CD4-positive, alpha-beta memory T cell (primary cell): ENCODE measurements at regions of chr6 and their contacts with region 1.

Region 1: DNA sequence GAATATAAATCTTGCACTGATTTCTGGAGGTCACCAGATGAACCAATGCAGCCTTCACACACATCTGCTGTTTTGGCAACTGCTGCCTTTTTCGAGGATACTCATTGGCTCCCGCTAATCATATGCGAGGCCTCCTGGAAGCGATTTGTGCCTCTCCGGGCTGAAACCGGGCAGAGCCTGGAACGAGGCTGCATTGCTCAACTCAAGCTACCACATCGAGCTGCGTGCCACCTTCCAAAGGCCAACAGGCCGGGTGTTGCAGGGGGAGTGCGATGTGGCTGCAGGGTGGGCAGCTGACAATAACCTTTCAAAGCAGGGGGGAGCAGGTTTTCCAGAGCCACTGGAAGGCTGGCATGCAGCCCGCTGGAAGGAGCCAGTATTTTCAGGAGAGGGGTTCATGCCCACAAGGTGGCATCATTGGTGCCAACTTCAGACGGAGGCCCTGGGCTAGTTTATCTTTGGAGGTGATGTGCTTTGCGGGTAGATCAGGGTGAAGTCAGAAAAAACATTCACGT is 122.6 kb upstream of the IFNGR1 start:
- DNase-seq: peak; percentile 56 to 67 (median 62)
- H3K4me3 ChIP-seq: no peak overlapping the region
- H3K4me3 Mint-ChIP-seq: peak overlapping the region; percentile 4 to 92 (median 76)
- H3K27ac ChIP-seq: no peak overlapping the region
- H3K27ac Mint-ChIP-seq: peak overlapping the region in 1 of 7 donors; percentile 15
- H3K4me1 ChIP-seq: peaks cover 18% of the 10 kb centered on the region
- H3K4me1 Mint-ChIP-seq: peaks cover 15 to 32% (median 20%) of the 10 kb centered on the region in 4 donors
- H3K27me3 ChIP-seq: no peaks in the 10 kb centered on the region
- H3K27me3 Mint-ChIP-seq: no peaks in the 10 kb centered on the region

Region 2: GRCh38 chr6:137351890-137352289 is 10.2 kb after region 1 on chr6:
- CTCF ChIA-PET with region 1: interaction called, 26 read pairs
- POLR2A ChIA-PET with region 1: interaction called, 15 read pairs
- intact Hi-C with region 1: no loop called
- DNase-seq: no peak
- H3K4me3 ChIP-seq: no peak overlapping the region
- H3K4me3 Mint-ChIP-seq: no peak overlapping the region
- H3K27ac ChIP-seq: no peak overlapping the region
- H3K27ac Mint-ChIP-seq: peak overlapping the region in 4 of 7 donors; percentile 25 to 81 (median 29)
- H3K4me1 ChIP-seq: peaks cover 15% of the 10 kb centered on the region
- H3K4me1 Mint-ChIP-seq: peaks cover 12 to 22% (median 21%) of the 10 kb centered on the region in 4 donors
- H3K27me3 ChIP-seq: no peaks in the 10 kb centered on the region
- H3K27me3 Mint-ChIP-seq: no peaks in the 10 kb centered on the region

Region 3: DNA sequence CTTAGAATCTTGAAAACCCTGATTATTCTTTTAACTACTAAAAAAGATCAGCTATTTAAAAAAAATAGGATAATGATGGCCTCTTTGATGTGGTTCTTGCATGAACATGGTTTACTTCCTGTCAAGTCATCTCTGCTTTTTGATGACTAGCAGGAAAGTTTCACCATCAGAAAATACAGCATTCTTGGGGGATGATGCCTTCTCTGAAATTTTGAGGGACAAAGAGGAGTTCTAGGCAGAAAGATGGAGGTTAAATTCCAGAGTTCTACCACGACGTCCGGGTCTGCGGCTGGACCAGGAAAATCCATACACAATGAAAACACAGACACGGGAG is 22.0 kb after region 1 on chr6:
- CTCF ChIA-PET with region 1: interaction called, 26 read pairs
- POLR2A ChIA-PET with region 1: interaction called, 6 read pairs
- intact Hi-C with region 1: loop called (anchors 1 kb)
- DNase-seq: peak in 4 of 5 donors; percentile 62 to 74 (median 69)
- H3K4me3 ChIP-seq: no peak overlapping the region
- H3K4me3 Mint-ChIP-seq: peak overlapping the region; percentile 7 to 77 (median 68)
- H3K27ac ChIP-seq: no peak overlapping the region
- H3K27ac Mint-ChIP-seq: peak overlapping the region in 6 of 7 donors; percentile 12 to 90 (median 72)
- H3K4me1 ChIP-seq: peaks cover 27% of the 10 kb centered on the region
- H3K4me1 Mint-ChIP-seq: peaks cover 26 to 38% (median 32%) of the 10 kb centered on the region in 4 donors
- H3K27me3 ChIP-seq: no peaks in the 10 kb centered on the region
- H3K27me3 Mint-ChIP-seq: no peaks in the 10 kb centered on the region

Region 4: DNA sequence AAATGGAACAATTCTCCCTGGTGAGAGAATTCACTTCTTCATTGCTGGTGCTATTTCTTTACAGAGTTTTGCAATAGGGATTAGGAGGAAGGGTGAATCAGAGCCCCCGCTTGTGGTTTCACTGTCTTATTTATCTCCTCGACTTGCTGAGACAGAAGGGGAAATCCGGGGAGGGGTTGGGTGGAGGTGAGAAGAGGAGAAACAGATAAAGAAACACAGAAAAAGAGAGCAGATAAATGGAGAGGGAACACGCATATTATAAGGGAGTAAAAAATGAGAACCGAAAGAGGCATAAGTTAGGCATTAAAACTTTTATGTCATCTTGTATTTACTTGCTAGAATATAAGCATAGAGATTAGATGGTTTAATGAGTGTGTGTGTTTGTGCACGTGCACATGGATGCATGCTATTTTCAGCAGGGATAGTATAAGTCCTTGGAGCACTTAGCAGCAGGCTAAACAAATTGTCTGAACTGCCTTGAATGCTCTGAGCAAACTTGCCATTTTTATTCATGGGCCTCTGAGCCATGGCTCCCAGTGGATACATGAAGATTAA is 47.5 kb after region 1 on chr6:
- CTCF ChIA-PET with region 1: interaction called, 31 read pairs
- POLR2A ChIA-PET with region 1: interaction called, 12 read pairs
- intact Hi-C with region 1: no loop called
- DNase-seq: peak; percentile 63 to 88 (median 71)
- H3K4me3 ChIP-seq: peak overlapping the region in 1 of 2 donors; percentile 8
- H3K4me3 Mint-ChIP-seq: peak overlapping the region; percentile 63 to 85 (median 80)
- H3K27ac ChIP-seq: peak overlapping the region; percentile 53
- H3K27ac Mint-ChIP-seq: peak overlapping the region; percentile 63 to 98 (median 93)
- H3K4me1 ChIP-seq: peaks cover 66% of the 10 kb centered on the region
- H3K4me1 Mint-ChIP-seq: peaks cover 61 to 87% (median 73%) of the 10 kb centered on the region in 4 donors
- H3K27me3 ChIP-seq: no peaks in the 10 kb centered on the region
- H3K27me3 Mint-ChIP-seq: no peaks in the 10 kb centered on the region

Region 5: GRCh38 chr6:137405806-137406205 is 64.1 kb after region 1 on chr6:
- CTCF ChIA-PET with region 1: interaction called, 13 read pairs
- POLR2A ChIA-PET with region 1: interaction called, 4 read pairs
- intact Hi-C with region 1: no loop called
- DNase-seq: no peak
- H3K4me3 ChIP-seq: no peak overlapping the region
- H3K4me3 Mint-ChIP-seq: no peak overlapping the region
- H3K27ac ChIP-seq: no peak overlapping the region
- H3K27ac Mint-ChIP-seq: no peak overlapping the region
- H3K4me1 ChIP-seq: no peaks in the 10 kb centered on the region
- H3K4me1 Mint-ChIP-seq: peaks cover 4 to 29% (median 12%) of the 10 kb centered on the region in 4 donors
- H3K27me3 ChIP-seq: no peaks in the 10 kb centered on the region
- H3K27me3 Mint-ChIP-seq: no peaks in the 10 kb centered on the region

Region 6: GRCh38 chr6:137423444-137424168 is 81.9 kb after region 1 on chr6:
- CTCF ChIA-PET with region 1: interaction called, 309 read pairs
- POLR2A ChIA-PET with region 1: interaction called, 82 read pairs
- intact Hi-C with region 1: no loop called
- DNase-seq: no peak
- H3K4me3 ChIP-seq: no peak overlapping the region
- H3K4me3 Mint-ChIP-seq: no peak overlapping the region
- H3K27ac ChIP-seq: no peak overlapping the region
- H3K27ac Mint-ChIP-seq: no peak overlapping the region
- H3K4me1 ChIP-seq: peaks cover 11% of the 10 kb centered on the region
- H3K4me1 Mint-ChIP-seq: peaks cover 7 to 28% (median 17%) of the 10 kb centered on the region in 4 donors
- H3K27me3 ChIP-seq: no peaks in the 10 kb centered on the region
- H3K27me3 Mint-ChIP-seq: peaks cover 0 to 3% of the 10 kb centered on the region in 2 donors

Region 7: DNA sequence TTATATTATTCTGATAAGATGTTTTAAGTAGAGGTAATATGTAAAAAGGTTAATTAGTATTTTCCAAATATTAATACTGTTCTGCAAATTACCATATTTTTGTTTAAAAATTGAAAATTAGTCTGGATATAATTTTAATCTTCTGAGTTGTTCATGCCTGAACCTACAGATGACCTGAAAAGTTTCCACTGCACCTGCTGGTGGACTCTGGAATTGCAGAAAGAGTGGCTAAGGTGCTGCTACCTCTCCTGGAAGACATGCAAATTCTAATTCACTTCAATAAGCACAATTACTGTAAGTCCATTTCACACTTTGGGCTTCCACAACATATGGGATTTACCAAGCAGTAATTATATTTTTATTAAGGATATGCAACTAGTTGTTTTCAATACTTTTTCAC is 230.1 kb after region 1 on chr6:
- CTCF ChIA-PET with region 1: interaction called, 7 read pairs
- POLR2A ChIA-PET with region 1: no interaction called
- intact Hi-C with region 1: loop called (anchors 5 kb)
- DNase-seq: peak; percentile 51 to 64 (median 56)
- H3K4me3 ChIP-seq: no peak overlapping the region
- H3K4me3 Mint-ChIP-seq: no peak overlapping the region
- H3K27ac ChIP-seq: no peak overlapping the region
- H3K27ac Mint-ChIP-seq: no peak overlapping the region
- H3K4me1 ChIP-seq: no peaks in the 10 kb centered on the region
- H3K4me1 Mint-ChIP-seq: peaks cover 0 to 13% (median 6%) of the 10 kb centered on the region in 4 donors
- H3K27me3 ChIP-seq: no peaks in the 10 kb centered on the region
- H3K27me3 Mint-ChIP-seq: peaks cover 3 to 12% of the 10 kb centered on the region in 2 donors